Calu3 (cell line): ENCODE measurements at regions of chr11 and their contacts with region 1.

Region 1: DNA sequence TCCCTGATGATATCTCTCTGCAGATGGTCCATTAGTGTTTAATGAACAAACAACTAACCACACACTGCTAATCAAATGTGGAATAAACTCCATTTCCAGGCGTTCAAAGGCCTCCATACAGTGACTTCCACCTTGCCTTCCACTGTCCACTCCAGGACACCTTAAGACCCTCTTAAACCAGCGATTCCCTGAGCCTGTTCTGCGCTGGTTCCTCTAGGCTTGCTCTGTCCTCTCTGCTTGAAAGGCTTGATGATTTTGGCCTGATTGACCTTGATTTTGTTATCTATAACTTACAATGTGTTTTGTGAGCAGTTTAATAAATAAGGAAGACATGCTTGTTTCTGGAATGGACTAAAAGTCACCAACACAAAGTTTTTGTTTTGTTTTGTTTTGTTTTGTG is 12.0 kb downstream of the OVCH2 start:
- DNase-seq: no peak
- H3K4me3 Mint-ChIP-seq: no peak overlapping the region
- H3K27ac Mint-ChIP-seq: no peak overlapping the region
- H3K4me1 Mint-ChIP-seq: no peaks in the 10 kb centered on the region
- H3K27me3 Mint-ChIP-seq: peaks cover 63% of the 10 kb centered on the region
- CTCF ChIP-seq: no peak

Region 2: DNA sequence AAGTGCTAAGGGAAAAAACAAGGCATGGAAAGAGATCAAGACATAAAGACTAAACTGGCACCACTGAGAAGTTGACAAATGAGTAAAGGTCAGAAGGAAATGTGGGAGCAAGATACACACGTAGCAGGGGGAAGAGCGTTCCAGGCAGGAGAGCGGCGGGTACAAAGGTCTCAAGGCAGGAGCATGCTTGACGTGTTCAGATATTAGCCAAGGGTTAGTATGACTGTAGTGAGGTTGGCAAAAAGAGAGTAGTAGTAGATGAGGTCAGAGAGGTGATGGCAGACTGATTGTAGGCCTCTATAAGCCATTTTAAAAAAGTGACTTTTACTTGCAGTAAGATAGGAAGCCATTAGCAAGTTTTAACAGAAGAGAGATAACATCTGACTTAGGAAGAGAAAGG is 432.7 kb before region 1 on chr11:
- CTCF ChIA-PET with region 1: no interaction called
- intact Hi-C with region 1: no loop called
- DNase-seq: no peak
- H3K4me3 Mint-ChIP-seq: no peak overlapping the region
- H3K27ac Mint-ChIP-seq: no peak overlapping the region
- H3K4me1 Mint-ChIP-seq: no peaks in the 10 kb centered on the region
- H3K27me3 Mint-ChIP-seq: no peaks in the 10 kb centered on the region
- CTCF ChIP-seq: no peak

Region 3: DNA sequence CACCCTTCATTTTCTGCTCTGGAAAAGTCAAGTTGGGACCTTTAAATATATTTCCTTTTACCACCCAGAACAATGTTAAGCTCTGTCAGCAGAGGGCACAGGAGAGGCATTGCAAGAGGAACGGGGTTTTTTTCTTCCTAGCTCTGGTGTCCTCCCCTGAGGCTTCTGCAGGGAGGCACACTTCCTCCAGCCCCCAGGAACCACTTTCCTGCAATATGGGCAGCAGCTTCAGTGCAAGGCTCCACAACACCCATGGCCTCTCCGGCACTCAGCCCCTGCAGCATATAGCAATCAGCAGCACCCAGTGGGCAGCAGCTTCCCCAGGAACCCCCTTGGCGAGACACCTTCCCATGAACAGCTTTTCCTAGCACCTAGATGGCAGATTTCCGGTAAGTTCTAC is 341.1 kb before region 1 on chr11:
- CTCF ChIA-PET with region 1: interaction called, 4 read pairs
- intact Hi-C with region 1: loop called (anchors 2 kb)
- DNase-seq: peak; percentile 49
- H3K4me3 Mint-ChIP-seq: no peak overlapping the region
- H3K27ac Mint-ChIP-seq: no peak overlapping the region
- H3K4me1 Mint-ChIP-seq: no peaks in the 10 kb centered on the region
- H3K27me3 Mint-ChIP-seq: peaks cover 61% of the 10 kb centered on the region
- CTCF ChIP-seq: peak; percentile 65